Prostate gland (tissue), 2 donors: ENCODE measurements at regions of chrX and their contacts with region 1.

Region 1: DNA sequence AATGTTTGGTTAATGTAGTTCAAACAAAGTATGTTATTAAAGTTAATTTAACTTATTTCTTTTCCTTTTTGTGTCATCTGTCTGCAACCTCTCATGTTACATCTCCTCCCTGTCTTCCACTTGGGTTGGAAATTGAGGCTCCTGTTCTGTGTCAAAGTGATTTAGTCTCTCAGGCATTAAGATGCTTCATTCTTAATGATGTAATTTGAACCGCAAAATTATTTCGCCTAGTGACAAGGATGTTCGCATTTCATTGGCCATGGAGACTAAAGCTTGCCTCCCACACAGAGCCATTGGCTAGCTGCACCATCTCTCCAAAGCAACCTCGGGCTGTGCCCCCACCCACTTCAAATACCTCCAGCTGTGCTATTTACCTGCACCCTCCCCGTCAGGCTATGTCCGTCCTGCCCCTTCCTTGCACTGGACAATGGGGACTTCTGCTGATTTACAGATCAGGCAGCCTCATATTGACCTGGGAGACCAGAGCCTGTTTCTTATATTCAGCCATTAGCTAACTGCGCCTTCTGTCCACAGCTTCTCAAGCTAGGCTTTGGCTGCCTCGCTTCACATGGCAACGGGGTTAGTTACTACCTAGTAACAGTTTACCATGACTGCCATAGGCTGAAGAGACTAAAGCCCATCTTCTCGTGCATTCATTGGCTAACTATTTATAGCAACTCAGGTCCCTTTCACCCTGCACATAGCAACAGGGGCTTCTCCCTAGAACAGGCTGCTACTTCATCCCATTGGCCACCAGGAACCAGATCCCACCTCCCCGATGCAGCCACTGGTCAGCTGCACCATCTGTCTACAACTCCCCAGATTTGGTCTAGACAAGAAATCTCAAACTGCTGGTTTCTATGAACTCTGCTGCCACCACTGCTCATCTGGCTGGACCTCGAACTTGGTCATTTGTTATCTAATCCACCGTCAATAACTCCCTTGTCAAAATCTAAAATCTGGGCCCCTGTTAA is 8.6 kb upstream of the ZNF157 start:
- DNase-seq: peak; percentile 20
- H3K4me3 ChIP-seq: no peak overlapping the region
- H3K27ac ChIP-seq: peak overlapping the region; percentile 47 to 57
- H3K4me1 ChIP-seq: no peaks in the 10 kb centered on the region
- H3K27me3 ChIP-seq: no peaks in the 10 kb centered on the region
- CTCF ChIP-seq: peak in 1 of 4 experiments; percentile 9
- POLR2A ChIP-seq: no peak

Region 2: GRCh38 chrX:47217642-47218279 is 144.1 kb before region 1 on chrX:
- intact Hi-C with region 1: loop called (anchors 5 kb)
- DNase-seq: peak; percentile 96
- H3K4me3 ChIP-seq: peak overlapping the region; percentile 68 to 70
- H3K27ac ChIP-seq: peak overlapping the region; percentile 95 to 97
- H3K4me1 ChIP-seq: no peaks in the 10 kb centered on the region
- H3K27me3 ChIP-seq: no peaks in the 10 kb centered on the region
- CTCF ChIP-seq: no peak
- POLR2A ChIP-seq: peak; percentile 44

Region 3: GRCh38 chrX:47467131-47467530 is 105.3 kb after region 1 on chrX:
- intact Hi-C with region 1: no loop called
- DNase-seq: no peak
- H3K4me3 ChIP-seq: no peak overlapping the region
- H3K27ac ChIP-seq: no peak overlapping the region
- H3K4me1 ChIP-seq: no peaks in the 10 kb centered on the region
- H3K27me3 ChIP-seq: no peaks in the 10 kb centered on the region
- CTCF ChIP-seq: no peak
- POLR2A ChIP-seq: no peak

Region 4: GRCh38 chrX:47573394-47574075 is 211.7 kb after region 1 on chrX:
- intact Hi-C with region 1: no loop called
- DNase-seq: peak; percentile 14
- H3K4me3 ChIP-seq: peak overlapping the region; percentile 12 to 18
- H3K27ac ChIP-seq: peak overlapping the region; percentile 48 to 60
- H3K4me1 ChIP-seq: no peaks in the 10 kb centered on the region
- H3K27me3 ChIP-seq: no peaks in the 10 kb centered on the region
- CTCF ChIP-seq: no peak
- POLR2A ChIP-seq: no peak